ENCODE measurements at regions of chr2 and their contacts with region 1.

Region 1: GRCh38 chr2:10072656-10073480 is 7.3 kb downstream of the CYS1 start:
- DNase-seq: peak; percentile 86
- ATAC-seq: peak; percentile 95
- H3K4me3 ChIP-seq: no peak overlapping the region
- H3K4me3 Mint-ChIP-seq: no peak overlapping the region
- H3K27ac ChIP-seq: no peak overlapping the region
- H3K27ac Mint-ChIP-seq: no peak overlapping the region
- H3K4me1 ChIP-seq: peaks cover 3 to 6% of the 10 kb centered on the region in 2 donors
- H3K4me1 Mint-ChIP-seq: peaks cover 4% of the 10 kb centered on the region
- H3K27me3 ChIP-seq: peaks cover 0 to 36% (median 22%) of the 10 kb centered on the region in 4 experiments
- H3K27me3 Mint-ChIP-seq: peaks cover 43% of the 10 kb centered on the region
- CTCF ChIP-seq: peak; percentile 81

Region 2: DNA sequence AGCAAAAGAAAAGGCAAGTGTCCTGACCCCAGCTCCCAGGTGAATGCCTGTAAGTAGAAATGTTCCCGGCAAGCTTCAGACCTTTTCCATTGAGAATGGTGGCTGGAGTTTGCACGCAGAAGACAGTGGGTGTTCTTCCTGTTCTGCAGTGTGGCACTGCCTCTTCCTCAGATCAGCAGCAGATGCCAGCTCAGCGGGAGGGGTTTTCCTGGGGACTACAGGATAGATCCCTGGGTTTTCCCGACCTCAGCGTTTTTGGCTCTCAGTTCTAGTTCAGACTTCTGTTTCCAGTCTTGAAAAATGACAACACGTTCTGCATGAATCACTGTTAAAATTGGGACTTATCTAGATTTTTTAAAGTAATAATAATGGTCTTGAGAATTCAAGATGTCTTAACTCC is 82.1 kb before region 1 on chr2:
- CTCF ChIA-PET with region 1: no interaction called
- POLR2A ChIA-PET with region 1: no interaction called
- intact Hi-C with region 1: no loop called
- DNase-seq: no peak
- ATAC-seq: no peak
- H3K4me3 ChIP-seq: no peak overlapping the region
- H3K4me3 Mint-ChIP-seq: no peak overlapping the region
- H3K27ac ChIP-seq: no peak overlapping the region
- H3K27ac Mint-ChIP-seq: no peak overlapping the region
- H3K4me1 ChIP-seq: no peaks in the 10 kb centered on the region
- H3K4me1 Mint-ChIP-seq: no peaks in the 10 kb centered on the region
- H3K27me3 ChIP-seq: no peaks in the 10 kb centered on the region
- H3K27me3 Mint-ChIP-seq: no peaks in the 10 kb centered on the region
- CTCF ChIP-seq: no peak

Region 3: DNA sequence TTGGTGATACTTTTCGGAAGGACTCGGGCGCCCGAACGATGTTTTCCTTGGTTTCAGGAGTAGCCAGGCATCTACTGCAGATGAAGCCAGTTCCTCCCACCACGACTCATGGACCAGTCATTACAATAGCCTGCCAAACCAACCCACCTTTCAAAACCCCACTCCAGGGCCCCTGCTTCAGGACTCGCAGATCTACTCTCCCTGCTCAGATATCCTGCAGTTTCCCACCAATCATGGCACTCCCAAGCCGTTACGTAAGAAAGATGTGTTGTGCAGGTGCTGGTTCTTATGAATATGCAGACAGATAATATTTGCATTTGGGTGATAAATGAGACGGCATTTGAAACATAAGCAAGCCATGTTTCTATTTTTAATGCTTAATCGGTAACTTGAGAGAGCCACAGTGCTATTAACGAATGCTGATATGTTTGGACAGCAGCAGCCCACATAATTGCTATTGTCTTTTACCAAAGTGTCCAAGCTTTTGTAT is 10.9 kb after region 1 on chr2:
- CTCF ChIA-PET with region 1: interaction called, 143 read pairs
- POLR2A ChIA-PET with region 1: interaction called, 4 read pairs
- intact Hi-C with region 1: no loop called
- DNase-seq: no peak
- ATAC-seq: no peak
- H3K4me3 ChIP-seq: no peak overlapping the region
- H3K4me3 Mint-ChIP-seq: no peak overlapping the region
- H3K27ac ChIP-seq: no peak overlapping the region
- H3K27ac Mint-ChIP-seq: no peak overlapping the region
- H3K4me1 ChIP-seq: peaks cover 17 to 22% of the 10 kb centered on the region in 2 donors
- H3K4me1 Mint-ChIP-seq: peaks cover 11% of the 10 kb centered on the region
- H3K27me3 ChIP-seq: peaks cover 0 to 58% (median 32%) of the 10 kb centered on the region in 4 experiments
- H3K27me3 Mint-ChIP-seq: peaks cover 57% of the 10 kb centered on the region
- CTCF ChIP-seq: no peak

Region 4: DNA sequence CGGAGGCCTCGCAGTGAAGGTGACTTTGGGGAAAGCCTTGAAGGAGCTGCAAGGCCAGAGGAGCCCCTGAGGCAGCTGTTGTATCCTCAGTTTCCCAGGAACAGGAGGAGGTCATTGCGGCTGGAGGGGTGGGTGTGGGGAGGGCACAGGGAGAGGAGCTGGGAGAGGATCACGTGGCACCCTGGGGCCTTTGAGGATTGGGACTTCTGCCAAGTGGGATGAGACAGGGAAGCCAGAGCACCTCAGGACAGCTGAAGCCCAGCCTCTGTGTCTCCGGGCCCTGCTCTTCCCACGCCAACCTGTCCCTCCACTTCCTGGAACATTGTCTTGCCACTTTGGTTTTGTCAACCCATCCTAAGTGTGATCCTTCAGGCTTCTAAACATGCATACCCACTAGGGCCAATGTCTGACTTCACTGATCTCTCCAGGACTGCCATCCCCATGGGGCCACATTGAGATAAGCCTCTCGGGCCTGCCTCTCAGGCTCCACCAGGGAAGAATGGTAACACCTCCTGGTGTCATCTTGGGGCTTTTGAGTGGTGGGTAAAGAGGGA is 30.4 kb after region 1 on chr2:
- CTCF ChIA-PET with region 1: interaction called, 143 read pairs
- POLR2A ChIA-PET with region 1: no interaction called
- intact Hi-C with region 1: no loop called
- DNase-seq: no peak
- ATAC-seq: no peak
- H3K4me3 ChIP-seq: no peak overlapping the region
- H3K4me3 Mint-ChIP-seq: no peak overlapping the region
- H3K27ac ChIP-seq: no peak overlapping the region
- H3K27ac Mint-ChIP-seq: no peak overlapping the region
- H3K4me1 ChIP-seq: no peaks in the 10 kb centered on the region
- H3K4me1 Mint-ChIP-seq: no peaks in the 10 kb centered on the region
- H3K27me3 ChIP-seq: no peaks in the 10 kb centered on the region
- H3K27me3 Mint-ChIP-seq: peaks cover under 1% of the 10 kb centered on the region
- CTCF ChIP-seq: no peak

Region 5: DNA sequence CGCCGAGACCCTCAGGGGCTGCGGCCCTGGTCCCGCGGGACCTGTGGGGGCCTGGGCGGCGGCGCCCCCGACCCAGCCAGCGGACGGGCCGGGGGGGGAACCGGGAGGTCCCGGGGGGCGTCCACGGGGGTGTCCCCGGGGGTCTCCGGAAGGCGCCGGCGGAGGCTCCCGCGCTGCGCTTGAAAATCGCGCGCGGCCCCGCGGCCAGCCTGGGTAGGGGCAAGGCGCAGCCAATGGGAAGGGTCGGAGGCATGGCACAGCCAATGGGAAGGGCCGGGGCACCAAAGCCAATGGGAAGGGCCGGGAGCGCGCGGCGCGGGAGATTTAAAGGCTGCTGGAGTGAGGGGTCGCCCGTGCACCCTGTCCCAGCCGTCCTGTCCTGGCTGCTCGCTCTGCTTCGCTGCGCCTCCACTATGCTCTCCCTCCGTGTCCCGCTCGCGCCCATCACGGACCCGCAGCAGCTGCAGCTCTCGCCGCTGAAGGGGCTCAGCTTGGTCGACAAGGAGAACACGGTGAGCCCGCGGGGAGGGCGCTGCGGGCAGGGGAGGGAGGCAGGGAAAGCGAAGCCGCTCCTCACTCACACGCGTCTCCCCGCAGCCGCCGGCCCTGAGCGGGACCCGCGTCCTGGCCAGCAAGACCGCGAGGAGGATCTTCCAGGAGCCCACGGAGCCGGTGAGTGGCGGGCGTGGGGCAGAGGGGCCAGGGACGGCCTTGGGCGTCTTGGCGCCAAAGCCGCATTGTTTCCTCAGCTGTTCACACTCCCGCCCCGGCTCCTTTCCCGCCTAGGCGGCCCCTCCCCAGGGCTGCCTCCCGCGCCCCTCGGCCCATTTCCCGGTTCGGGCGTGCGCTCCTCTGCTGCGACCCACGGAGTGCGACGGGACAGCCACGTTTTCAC is 49.8 kb after region 1 on chr2 and contains the start of gene RRM2:
- CTCF ChIA-PET with region 1: interaction called, 33 read pairs
- POLR2A ChIA-PET with region 1: no interaction called
- intact Hi-C with region 1: loop called (anchors 2 kb)
- DNase-seq: peak; percentile 91
- ATAC-seq: peak; percentile 82
- H3K4me3 ChIP-seq: peak within 1 kb of the TSS in 4 of 5 experiments; percentile 42 to 77 (median 54)
- H3K4me3 Mint-ChIP-seq: peak within 1 kb of the TSS; percentile 98
- H3K27ac ChIP-seq: no peak within 1 kb of the TSS
- H3K27ac Mint-ChIP-seq: peak within 1 kb of the TSS; percentile 59
- H3K4me1 ChIP-seq: peaks cover 29 to 32% of the 10 kb centered on the region in 2 donors
- H3K4me1 Mint-ChIP-seq: peaks cover 30% of the 10 kb centered on the region
- H3K27me3 ChIP-seq: peaks cover 0 to 17% (median 8%) of the 10 kb centered on the region in 4 experiments
- H3K27me3 Mint-ChIP-seq: peaks cover 10% of the 10 kb centered on the region
- CTCF ChIP-seq: no peak
- total RNA-seq, gene RRM2: 1.2 and 1.3 TPM in 2 replicates